ENCODE measurements at regions of chr18 and their contacts with region 1.

Region 1: GRCh38 chr18:5546660-5547059 is 2.9 kb upstream of the EPB41L3 start:
- DNase-seq: no peak
- H3K4me3 ChIP-seq: no peak overlapping the region
- H3K27ac ChIP-seq: no peak overlapping the region
- H3K4me1 ChIP-seq: peaks cover 0 to 3% (median 0%) of the 10 kb centered on the region in 4 experiments; a peak in 1 of 7 replicates
- H3K27me3 ChIP-seq: peaks cover 0 to 5% (median 3%) of the 10 kb centered on the region in 4 experiments; a peak in 4 of 7 replicates
- CTCF ChIP-seq: peak; percentile 14 to 77 (median 58)
- EP300 ChIP-seq: no peak
- POLR2A ChIP-seq: no peak
- RAD21 ChIP-seq: peak; percentile 72 to 80

Region 2: DNA sequence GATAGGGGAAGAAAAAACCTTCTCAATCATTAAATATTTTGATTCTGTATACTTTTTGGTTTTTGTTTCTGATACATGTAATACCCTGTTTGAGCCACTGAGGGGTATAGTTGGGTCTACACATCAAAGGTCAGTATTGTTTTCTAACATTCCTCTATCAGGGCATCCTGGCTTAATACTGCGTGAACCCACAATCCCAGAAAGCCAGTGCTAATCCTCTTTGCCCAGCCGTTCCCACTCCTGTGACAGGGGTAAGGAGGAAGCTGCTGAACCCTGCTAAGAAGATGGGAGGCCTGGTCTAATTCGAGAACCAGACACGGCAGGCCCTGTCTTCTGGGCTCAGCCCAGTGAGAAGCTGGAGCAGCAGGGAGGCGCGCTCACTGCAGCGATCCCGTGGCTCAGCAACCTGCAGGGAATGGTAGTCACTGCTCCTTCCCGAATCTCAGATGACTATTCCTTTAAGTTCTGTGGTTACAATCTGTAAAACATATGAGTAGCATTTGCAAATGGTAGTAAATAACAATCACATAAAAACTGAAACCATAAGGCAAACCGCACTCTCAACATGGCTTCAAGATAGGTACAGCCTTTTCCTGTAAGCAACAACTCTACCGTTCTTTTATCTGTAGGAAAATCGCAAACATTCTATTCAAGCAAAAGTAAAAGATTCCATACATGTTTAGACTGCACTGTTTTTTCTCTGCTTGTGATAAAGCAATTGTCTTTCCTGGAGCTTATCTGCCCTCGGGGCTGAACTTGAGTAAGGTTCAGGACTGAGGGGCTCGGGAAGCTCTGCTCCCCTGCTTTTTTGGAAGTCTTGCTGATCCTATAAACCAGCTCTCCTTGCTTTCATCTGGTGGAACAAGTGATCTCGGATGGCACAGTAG is 89.8 kb before region 1 on chr18:
- CTCF ChIA-PET with region 1: interaction called, 28 read pairs
- POLR2A ChIA-PET with region 1: no interaction called
- DNase-seq: peak in 1 of 2 experiments; percentile 56
- H3K4me3 ChIP-seq: peak overlapping the region in 3 of 4 experiments; percentile 13 to 47 (median 14); a peak in 4 of 8 replicates
- H3K27ac ChIP-seq: no peak overlapping the region
- H3K4me1 ChIP-seq: peaks cover 0 to 9% (median 1%) of the 10 kb centered on the region in 4 experiments; a peak in 3 of 7 replicates
- H3K27me3 ChIP-seq: no peaks in the 10 kb centered on the region
- CTCF ChIP-seq: peak in 2 of 3 experiments; percentile 29 to 39; a peak in 2 of 4 replicates
- EP300 ChIP-seq: no peak
- POLR2A ChIP-seq: no peak
- RAD21 ChIP-seq: peak; percentile 59 to 65

Region 3: GRCh38 chr18:5512176-5512575 is 34.5 kb before region 1 on chr18:
- CTCF ChIA-PET with region 1: interaction called, 13 read pairs
- POLR2A ChIA-PET with region 1: interaction called, 3 read pairs
- DNase-seq: no peak
- H3K4me3 ChIP-seq: peak overlapping the region in 1 of 4 experiments; percentile 10; a peak in 1 of 8 replicates
- H3K27ac ChIP-seq: no peak overlapping the region
- H3K4me1 ChIP-seq: peaks cover 1 to 8% (median 4%) of the 10 kb centered on the region in 4 experiments; a peak in 4 of 7 replicates
- H3K27me3 ChIP-seq: no peaks in the 10 kb centered on the region
- CTCF ChIP-seq: no peak
- EP300 ChIP-seq: no peak
- POLR2A ChIP-seq: no peak
- RAD21 ChIP-seq: no peak

Measured in H1 (cell line).